Heart left ventricle (tissue), 16 donors: ENCODE measurements at regions of chr12 and their contacts with region 1.

Region 1: DNA sequence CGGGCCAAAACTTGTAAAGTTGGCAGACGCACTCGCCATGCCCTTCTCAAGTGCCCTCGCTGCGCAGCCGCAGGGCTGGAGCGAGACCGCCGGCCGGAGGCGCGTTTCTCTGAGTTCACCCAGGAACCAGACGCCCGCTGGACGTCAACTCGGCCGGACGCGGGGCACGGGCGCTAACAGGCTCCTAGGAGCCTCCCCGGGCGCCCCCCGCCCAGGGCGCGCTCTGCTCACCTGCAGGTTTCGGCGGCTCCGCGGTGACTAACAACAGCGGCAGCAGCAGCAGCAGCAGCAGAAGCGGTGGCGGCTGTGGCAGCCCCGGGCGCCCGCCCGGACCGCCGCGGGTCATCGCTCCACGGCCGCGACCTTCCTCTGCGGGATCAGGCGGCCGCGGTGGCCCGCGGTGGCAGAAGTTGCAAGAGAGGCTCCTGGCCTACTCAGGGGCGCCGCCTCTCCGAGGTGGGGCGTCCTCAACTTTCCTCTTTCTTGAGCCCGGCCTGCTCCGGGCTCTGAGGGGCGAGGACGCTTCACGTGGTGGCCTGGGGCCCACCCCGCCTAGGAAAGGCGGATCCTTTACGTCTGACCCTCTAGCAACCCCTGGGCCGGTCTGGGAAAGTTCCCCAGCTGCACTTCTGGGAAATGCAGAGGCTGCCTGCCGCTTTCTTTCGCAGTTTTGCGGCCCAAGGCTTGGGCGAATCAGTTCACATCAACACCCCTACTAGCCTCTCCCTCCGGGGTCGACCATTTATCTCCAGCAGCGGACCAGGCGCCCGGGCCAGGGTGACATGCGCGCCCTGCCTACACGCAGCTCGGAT is at the start of gene PLBD1:
- DNase-seq: peak; percentile 77 to 91 (median 88)
- ATAC-seq: peak; percentile 81 to 95 (median 92)
- H3K4me3 ChIP-seq: peak within 1 kb of the TSS; percentile 45 to 79 (median 68)
- H3K27ac ChIP-seq: peak within 1 kb of the TSS; percentile 67 to 97 (median 92)
- H3K4me1 ChIP-seq: peaks cover 0 to 33% (median 3%) of the 10 kb centered on the region in 12 donors
- H3K27me3 ChIP-seq: no peaks in the 10 kb centered on the region
- CTCF ChIP-seq: peak in 1 of 12 donors; percentile 11
- POLR2A ChIP-seq: peak in 1 of 2 donors; percentile 78
- total RNA-seq, gene PLBD1: 11.9 to 49.1 (median 26.5) TPM

Region 2: GRCh38 chr12:14257734-14258574 is 309.6 kb before region 1 on chr12:
- intact Hi-C with region 1: loop called in 1 of 10 experiments (anchors 10 kb)
- DNase-seq: peak in 4 of 5 donors; percentile 94 to 97 (median 94)
- ATAC-seq: peak; percentile 82 to 87 (median 85)
- H3K4me3 ChIP-seq: peak overlapping the region in 8 of 12 donors; percentile 8 to 38 (median 26)
- H3K27ac ChIP-seq: peak overlapping the region; percentile 85 to 98 (median 88)
- H3K4me1 ChIP-seq: peaks cover 4 to 80% (median 46%) of the 10 kb centered on the region in 12 donors
- H3K27me3 ChIP-seq: peaks cover 0 to 3% (median 0%) of the 10 kb centered on the region in 9 donors
- CTCF ChIP-seq: peak in 1 of 12 donors; percentile 8
- POLR2A ChIP-seq: peak in 1 of 2 donors; percentile 53

Region 3: DNA sequence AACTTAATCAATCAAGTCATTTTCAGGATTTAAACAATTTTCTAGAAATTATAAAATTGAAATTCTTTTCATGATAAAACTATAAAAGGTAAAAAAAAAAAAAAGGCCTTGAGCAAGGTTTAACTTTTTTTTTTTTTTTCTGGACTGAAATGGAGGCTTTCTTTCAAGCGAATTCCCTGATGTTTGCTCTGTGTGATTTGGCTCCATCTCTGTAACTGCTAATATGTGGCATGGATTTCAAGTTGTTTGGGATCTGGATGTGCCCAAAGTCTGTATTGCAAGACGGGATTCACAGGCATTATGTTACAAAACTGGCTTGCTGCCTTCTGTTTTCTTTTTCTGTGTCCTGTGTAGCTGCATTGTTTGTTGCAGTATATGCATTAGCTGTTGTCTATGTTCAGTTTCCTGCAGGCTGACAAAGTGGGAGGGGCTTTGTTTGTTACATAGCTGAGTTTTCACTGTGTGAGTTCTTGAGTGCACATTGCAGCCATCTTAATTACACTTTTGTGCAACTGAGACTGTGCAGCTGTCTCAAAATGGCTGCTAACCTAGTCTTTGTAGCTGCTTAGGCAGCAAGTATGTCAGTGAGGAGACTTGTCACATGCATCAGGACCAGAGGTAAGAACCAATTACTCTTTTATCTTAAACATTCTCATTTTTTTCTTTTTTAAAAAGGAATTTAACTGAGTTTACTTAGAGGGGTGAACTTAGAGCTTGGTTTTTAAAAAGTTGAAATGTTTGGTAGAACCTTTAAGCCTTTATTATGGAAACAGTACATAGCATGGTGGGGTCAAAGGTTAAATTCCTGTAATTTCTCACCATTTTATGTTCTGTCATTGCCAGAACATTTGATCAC is 182.5 kb before region 1 on chr12:
- intact Hi-C with region 1: loop called in 1 of 10 experiments (anchors 10 kb)
- DNase-seq: peak in 4 of 5 donors; percentile 43 to 64 (median 50)
- ATAC-seq: peak; percentile 95 to 97 (median 96)
- H3K4me3 ChIP-seq: peak overlapping the region; percentile 3 to 54 (median 42)
- H3K27ac ChIP-seq: peak overlapping the region; percentile 61 to 84 (median 79)
- H3K4me1 ChIP-seq: peaks cover 0 to 60% (median 17%) of the 10 kb centered on the region in 12 donors
- H3K27me3 ChIP-seq: no peaks in the 10 kb centered on the region
- CTCF ChIP-seq: no peak
- POLR2A ChIP-seq: peak in 1 of 2 donors; percentile 21

Region 4: DNA sequence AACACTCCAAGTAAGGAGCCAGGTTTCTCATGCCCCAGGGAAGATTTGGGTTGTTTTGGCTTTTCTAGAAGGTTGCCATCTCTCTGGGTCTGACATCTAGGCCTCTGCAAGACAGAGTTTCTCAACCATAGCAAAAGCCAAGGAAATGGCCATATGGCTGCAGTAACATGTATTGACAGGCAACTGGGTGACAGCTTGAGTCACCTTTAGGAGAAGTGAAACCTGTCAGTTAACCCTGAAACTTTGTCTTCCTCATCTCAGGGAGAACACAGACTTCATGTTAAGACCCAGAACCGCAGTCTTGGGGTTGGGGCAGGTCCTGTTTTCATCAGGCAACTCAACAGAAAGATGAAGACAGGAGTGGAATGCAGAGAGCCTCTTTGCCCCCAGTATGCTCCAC is 46.2 kb after region 1 on chr12:
- intact Hi-C with region 1: loop called in 5 of 10 experiments (anchors 5 kb)
- DNase-seq: no peak
- ATAC-seq: no peak
- H3K4me3 ChIP-seq: no peak overlapping the region
- H3K27ac ChIP-seq: peak overlapping the region in 9 of 12 donors; percentile 13 to 78 (median 52)
- H3K4me1 ChIP-seq: peaks cover 0 to 29% (median 18%) of the 10 kb centered on the region in 12 donors
- H3K27me3 ChIP-seq: no peaks in the 10 kb centered on the region
- CTCF ChIP-seq: no peak
- POLR2A ChIP-seq: no peak

Region 5: GRCh38 chr12:14618983-14619382 is 51.4 kb after region 1 on chr12:
- intact Hi-C with region 1: loop called in 5 of 10 experiments (anchors 5 kb)
- DNase-seq: peak in 1 of 5 donors; percentile 11
- ATAC-seq: peak in 2 of 4 donors; percentile 44 to 75
- H3K4me3 ChIP-seq: no peak overlapping the region
- H3K27ac ChIP-seq: no peak overlapping the region
- H3K4me1 ChIP-seq: peaks cover 0 to 16% (median 5%) of the 10 kb centered on the region in 12 donors
- H3K27me3 ChIP-seq: no peaks in the 10 kb centered on the region
- CTCF ChIP-seq: peak in 10 of 12 donors; percentile 23 to 60 (median 48)
- POLR2A ChIP-seq: no peak